CD4-positive, alpha-beta memory T cell (primary cell): ENCODE measurements at regions of chr17 and their contacts with region 1.

Region 1: DNA sequence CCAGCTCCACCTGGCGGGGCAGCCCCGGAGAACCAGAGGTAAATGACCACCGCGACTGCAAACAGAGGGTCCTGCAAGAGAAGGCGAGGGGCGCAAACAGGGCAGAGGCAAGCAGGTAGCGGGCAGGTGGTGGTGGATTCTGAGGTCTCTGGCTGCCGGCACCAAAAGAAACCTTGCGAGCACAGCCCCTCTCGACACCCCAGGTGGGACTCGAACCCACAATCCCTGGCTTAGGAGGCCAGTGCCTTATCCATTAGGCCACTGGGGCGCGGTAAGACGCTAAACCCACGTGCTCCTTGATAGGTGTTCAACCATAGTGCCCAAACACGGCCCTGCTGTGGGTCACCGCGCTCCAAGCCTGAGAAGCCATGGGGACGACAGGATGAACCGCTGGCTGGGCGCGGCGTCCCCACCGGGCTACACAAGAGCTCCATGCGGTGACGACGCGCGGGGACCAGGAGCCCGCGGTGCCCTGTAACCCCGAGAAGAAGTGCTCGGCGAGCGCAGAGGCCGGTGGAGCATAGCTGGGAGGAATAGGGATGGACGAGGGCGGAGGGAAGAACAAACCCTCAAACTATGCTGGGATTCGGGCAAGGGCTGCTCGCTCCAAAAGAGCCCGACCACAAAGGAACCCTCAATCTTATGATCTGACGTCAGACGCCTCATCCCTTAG is 12.4 kb downstream of the ATP5PD start:
- DNase-seq: peak; percentile 73 to 83 (median 75)
- H3K4me3 ChIP-seq: peak overlapping the region; percentile 64 to 70
- H3K4me3 Mint-ChIP-seq: peak overlapping the region; percentile 79 to 91 (median 88)
- H3K27ac ChIP-seq: peak overlapping the region; percentile 55
- H3K27ac Mint-ChIP-seq: peak overlapping the region; percentile 99 to 100 (median 100)
- H3K4me1 ChIP-seq: peaks cover 57% of the 10 kb centered on the region
- H3K4me1 Mint-ChIP-seq: peaks cover 31 to 69% (median 54%) of the 10 kb centered on the region in 4 donors
- H3K27me3 ChIP-seq: no peaks in the 10 kb centered on the region
- H3K27me3 Mint-ChIP-seq: peaks cover 0 to 14% of the 10 kb centered on the region in 2 donors

Region 2: DNA sequence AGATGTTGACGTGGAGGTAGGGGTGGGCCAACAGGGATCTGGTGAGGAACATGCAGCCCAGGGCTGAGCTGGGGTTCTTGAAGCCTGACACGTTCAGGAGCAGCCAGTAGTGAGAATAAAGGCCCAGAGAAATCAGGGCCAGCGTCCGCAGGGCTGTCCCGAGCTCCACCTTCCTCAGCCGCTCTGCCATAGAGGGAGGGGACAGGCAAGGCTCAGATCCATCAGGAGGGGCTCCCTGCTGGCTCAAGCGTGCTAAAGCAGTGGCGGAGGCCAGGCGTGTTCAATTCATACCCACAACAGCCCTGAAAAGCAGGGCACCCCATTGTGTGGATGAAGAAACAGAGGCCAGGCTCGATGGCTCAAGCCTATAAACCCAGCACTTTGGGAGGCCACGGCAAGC is 153.3 kb before region 1 on chr17:
- CTCF ChIA-PET with region 1: no interaction called
- POLR2A ChIA-PET with region 1: no interaction called
- intact Hi-C with region 1: no loop called
- DNase-seq: no peak
- H3K4me3 ChIP-seq: no peak overlapping the region
- H3K4me3 Mint-ChIP-seq: no peak overlapping the region
- H3K27ac ChIP-seq: no peak overlapping the region
- H3K27ac Mint-ChIP-seq: no peak overlapping the region
- H3K4me1 ChIP-seq: no peaks in the 10 kb centered on the region
- H3K4me1 Mint-ChIP-seq: no peaks in the 10 kb centered on the region
- H3K27me3 ChIP-seq: no peaks in the 10 kb centered on the region
- H3K27me3 Mint-ChIP-seq: peaks cover 7 to 11% of the 10 kb centered on the region in 2 donors

Region 3: GRCh38 chr17:74987418-74987908 is 46.9 kb before region 1 on chr17 and contains the start of gene CDR2L:
- CTCF ChIA-PET with region 1: no interaction called
- POLR2A ChIA-PET with region 1: interaction called, 9 read pairs
- intact Hi-C with region 1: loop called (anchors 2 kb)
- DNase-seq: peak; percentile 89 to 91 (median 90)
- H3K4me3 ChIP-seq: peak within 1 kb of the TSS in 1 of 2 donors; percentile 61
- H3K4me3 Mint-ChIP-seq: peak within 1 kb of the TSS; percentile 84 to 94 (median 90)
- H3K27ac ChIP-seq: no peak within 1 kb of the TSS
- H3K27ac Mint-ChIP-seq: peak within 1 kb of the TSS; percentile 3 to 84 (median 72)
- H3K4me1 ChIP-seq: peaks cover 17% of the 10 kb centered on the region
- H3K4me1 Mint-ChIP-seq: peaks cover 6 to 22% (median 12%) of the 10 kb centered on the region in 4 donors
- H3K27me3 ChIP-seq: no peaks in the 10 kb centered on the region
- H3K27me3 Mint-ChIP-seq: peaks cover 2% of the 10 kb centered on the region in 2 donors
- total RNA-seq, gene CDR2L: 0.08 to 0.20 TPM

Region 4: DNA sequence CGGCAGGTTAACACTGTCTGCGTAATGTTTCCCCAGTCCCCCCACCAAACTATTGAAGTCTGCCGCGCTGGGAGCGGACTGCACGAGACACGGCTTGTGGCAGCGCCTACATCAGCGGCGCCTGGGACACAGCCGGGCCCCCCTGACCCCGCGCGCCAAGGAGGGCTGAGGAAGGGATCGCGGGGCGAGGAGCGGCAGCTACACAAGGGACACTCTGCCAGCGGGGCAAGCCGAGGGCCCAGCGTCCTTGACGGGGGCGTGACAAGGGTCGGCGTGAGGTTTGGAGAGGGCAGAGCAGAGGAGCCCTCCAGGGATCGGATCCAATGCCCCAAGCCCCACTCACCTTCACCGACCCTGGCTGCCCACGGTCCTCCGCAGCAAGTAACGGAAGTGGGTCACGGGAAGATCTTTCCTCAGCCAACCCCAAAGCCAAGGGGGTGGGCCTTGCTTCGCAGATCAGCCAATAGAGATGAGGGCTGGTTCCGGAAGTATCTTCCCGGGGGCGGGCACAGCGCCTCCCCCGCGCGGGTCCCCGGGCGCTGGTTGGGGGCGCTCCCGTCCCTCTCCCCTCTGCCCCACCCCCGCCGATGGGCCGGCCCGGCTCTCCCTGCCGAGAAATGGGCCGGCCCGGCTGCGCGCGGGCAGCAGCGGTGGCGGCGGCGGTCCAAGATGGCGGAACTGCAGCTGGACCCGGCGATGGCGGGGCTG is 12.4 kb after region 1 on chr17 and contains the starts of genes ATP5PD and KCTD2:
- CTCF ChIA-PET with region 1: interaction called, 3 read pairs
- POLR2A ChIA-PET with region 1: interaction called, 119 read pairs
- intact Hi-C with region 1: loop called (anchors 1 kb)
- DNase-seq: peak; percentile 92 to 95 (median 94)
- H3K4me3 ChIP-seq: peak within 1 kb of the TSS; percentile 62 to 96
- H3K4me3 Mint-ChIP-seq: peak within 1 kb of the TSS; percentile 95 to 100 (median 97)
- H3K27ac ChIP-seq: peak within 1 kb of the TSS; percentile 85
- H3K27ac Mint-ChIP-seq: peak within 1 kb of the TSS; percentile 96 to 98 (median 97)
- H3K4me1 ChIP-seq: peaks cover 30% of the 10 kb centered on the region
- H3K4me1 Mint-ChIP-seq: peaks cover 25 to 63% (median 40%) of the 10 kb centered on the region in 4 donors
- H3K27me3 ChIP-seq: no peaks in the 10 kb centered on the region
- H3K27me3 Mint-ChIP-seq: no peaks in the 10 kb centered on the region
- total RNA-seq, gene ATP5PD: 167 to 171 TPM
- total RNA-seq, gene KCTD2: 31.1 to 31.7 TPM

Region 5: GRCh38 chr17:75069783-75070182 is 35.4 kb after region 1 on chr17:
- CTCF ChIA-PET with region 1: interaction called, 4 read pairs
- POLR2A ChIA-PET with region 1: interaction called, 12 read pairs
- intact Hi-C with region 1: no loop called
- DNase-seq: no peak
- H3K4me3 ChIP-seq: no peak overlapping the region
- H3K4me3 Mint-ChIP-seq: no peak overlapping the region
- H3K27ac ChIP-seq: no peak overlapping the region
- H3K27ac Mint-ChIP-seq: peak overlapping the region in 4 of 7 donors; percentile 25 to 62 (median 38)
- H3K4me1 ChIP-seq: peaks cover 21% of the 10 kb centered on the region
- H3K4me1 Mint-ChIP-seq: peaks cover 13 to 34% (median 23%) of the 10 kb centered on the region in 4 donors
- H3K27me3 ChIP-seq: no peaks in the 10 kb centered on the region
- H3K27me3 Mint-ChIP-seq: no peaks in the 10 kb centered on the region

Region 6: GRCh38 chr17:75087558-75088453 is 53.4 kb after region 1 on chr17 and contains the start of gene SLC16A5:
- CTCF ChIA-PET with region 1: no interaction called
- POLR2A ChIA-PET with region 1: interaction called, 11 read pairs
- intact Hi-C with region 1: no loop called
- DNase-seq: peak; percentile 42 to 58 (median 45)
- H3K4me3 ChIP-seq: peak within 1 kb of the TSS; percentile 65 to 68
- H3K4me3 Mint-ChIP-seq: peak within 1 kb of the TSS; percentile 82 to 90 (median 84)
- H3K27ac ChIP-seq: peak within 1 kb of the TSS; percentile 64
- H3K27ac Mint-ChIP-seq: peak within 1 kb of the TSS; percentile 35 to 97 (median 81)
- H3K4me1 ChIP-seq: peaks cover 32% of the 10 kb centered on the region
- H3K4me1 Mint-ChIP-seq: peaks cover 36 to 64% (median 49%) of the 10 kb centered on the region in 4 donors
- H3K27me3 ChIP-seq: no peaks in the 10 kb centered on the region
- H3K27me3 Mint-ChIP-seq: no peaks in the 10 kb centered on the region
- total RNA-seq, gene SLC16A5: 12.5 to 13.9 TPM